BJ (cell line): ENCODE measurements at regions of chr4 and their contacts with region 1.

Region 1: GRCh38 chr4:17468371-17469221 is 43.3 kb downstream of the QDPR start:
- DNase-seq: no peak
- H3K4me3 ChIP-seq: no peak overlapping the region
- H3K27me3 ChIP-seq: no peaks in the 10 kb centered on the region
- CTCF ChIP-seq: peak; percentile 40; the same call in 1 of the 2 replicates

Region 2: GRCh38 chr4:17347445-17347844 is 121.2 kb before region 1 on chr4:
- CTCF ChIA-PET with region 1: interaction called, 16 read pairs
- POLR2A ChIA-PET with region 1: no interaction called
- DNase-seq: no peak
- H3K4me3 ChIP-seq: no peak overlapping the region
- H3K27me3 ChIP-seq: no peaks in the 10 kb centered on the region; the same call in 1 of the 2 replicates
- CTCF ChIP-seq: peak; percentile 59

Region 3: GRCh38 chr4:17562160-17562559 is 93.6 kb after region 1 on chr4:
- CTCF ChIA-PET with region 1: no interaction called
- POLR2A ChIA-PET with region 1: no interaction called
- DNase-seq: no peak
- H3K4me3 ChIP-seq: no peak overlapping the region
- H3K27me3 ChIP-seq: no peaks in the 10 kb centered on the region
- CTCF ChIP-seq: no peak